CD4-positive, alpha-beta T cell (primary cell): ENCODE measurements at regions of chr2 and their contacts with region 1.

Region 1: GRCh38 chr2:118186110-118186857 is 98.0 kb downstream of the INSIG2 start:
- DNase-seq: peak; percentile 70 to 96 (median 86)
- ATAC-seq: peak; percentile 94
- H3K4me3 ChIP-seq: peak overlapping the region; percentile 76
- H3K4me3 Mint-ChIP-seq: peak overlapping the region; percentile 96
- H3K27ac ChIP-seq: peak overlapping the region; percentile 69 to 71
- H3K27ac Mint-ChIP-seq: peak overlapping the region; percentile 87
- H3K4me1 ChIP-seq: peaks cover 18% of the 10 kb centered on the region
- H3K4me1 Mint-ChIP-seq: peaks cover 16% of the 10 kb centered on the region
- H3K27me3 ChIP-seq: no peaks in the 10 kb centered on the region
- H3K27me3 Mint-ChIP-seq: no peaks in the 10 kb centered on the region
- CTCF ChIP-seq: no peak

Region 2: DNA sequence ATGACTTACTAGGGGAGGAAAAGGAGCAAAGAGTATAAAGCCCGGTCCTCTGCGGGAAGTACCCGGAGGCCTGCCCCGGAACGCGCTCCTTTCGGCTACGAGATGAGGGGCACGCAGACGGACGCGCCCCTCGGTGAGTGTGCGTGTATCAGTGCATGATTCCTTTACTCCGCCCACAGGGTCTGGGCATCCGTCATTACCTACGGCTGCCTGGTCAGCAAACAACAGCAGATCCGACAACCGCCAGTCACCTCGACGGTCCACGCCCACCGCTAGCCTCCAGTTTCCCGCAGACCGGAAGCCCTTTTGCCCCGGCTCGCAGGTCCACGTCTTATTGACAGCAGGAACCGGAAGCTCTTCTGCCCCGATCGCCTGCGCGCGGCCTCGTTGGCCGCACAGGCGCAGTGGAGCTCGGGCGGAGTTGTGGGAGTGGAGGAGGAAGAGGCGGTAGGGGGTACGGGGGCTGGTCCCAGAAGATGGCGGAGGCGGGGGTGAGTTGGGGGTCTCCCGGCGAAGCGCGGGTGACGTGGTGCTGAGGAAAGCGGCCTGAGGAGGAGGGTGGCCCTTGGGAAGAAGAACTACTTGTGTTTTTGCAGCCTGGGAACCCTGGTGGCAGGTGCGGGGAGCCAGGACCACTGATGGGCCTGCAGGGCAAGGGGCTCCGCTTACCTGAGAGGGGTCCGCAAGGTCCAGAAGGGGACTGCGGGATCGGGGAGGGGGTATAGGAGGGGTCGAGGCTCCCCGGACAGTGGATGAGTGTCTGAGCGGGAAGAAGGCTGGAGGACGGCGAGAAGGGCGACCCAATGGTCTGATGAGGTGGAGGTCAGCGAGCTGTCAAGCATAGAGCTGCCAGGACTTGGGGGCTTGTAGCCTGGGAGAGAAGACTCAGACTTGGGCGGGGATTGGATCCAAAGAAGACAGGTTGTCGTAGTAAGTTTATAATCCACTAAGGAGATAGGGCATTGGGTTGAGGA is 97.9 kb before region 1 on chr2 and contains the start of gene INSIG2:
- CTCF ChIA-PET with region 1: interaction called, 7 read pairs
- POLR2A ChIA-PET with region 1: interaction called, 16 read pairs
- intact Hi-C with region 1: loop called (anchors 2 to 10 kb)
- DNase-seq: peak; percentile 71 to 95 (median 81)
- ATAC-seq: peak; percentile 88
- H3K4me3 ChIP-seq: peak within 1 kb of the TSS; percentile 91
- H3K4me3 Mint-ChIP-seq: peak within 1 kb of the TSS; percentile 97
- H3K27ac ChIP-seq: peak within 1 kb of the TSS; percentile 58 to 61
- H3K27ac Mint-ChIP-seq: peak within 1 kb of the TSS; percentile 88
- H3K4me1 ChIP-seq: peaks cover 10% of the 10 kb centered on the region
- H3K4me1 Mint-ChIP-seq: peaks cover 38% of the 10 kb centered on the region
- H3K27me3 ChIP-seq: no peaks in the 10 kb centered on the region
- H3K27me3 Mint-ChIP-seq: no peaks in the 10 kb centered on the region
- CTCF ChIP-seq: no peak
- total RNA-seq, gene INSIG2: 7.3 to 7.7 TPM

Region 3: GRCh38 chr2:118097657-118098056 is 88.6 kb before region 1 on chr2:
- CTCF ChIA-PET with region 1: no interaction called
- POLR2A ChIA-PET with region 1: interaction called, 3 read pairs
- intact Hi-C with region 1: loop called in 1 of 2 experiments (anchors 10 kb)
- DNase-seq: peak in 2 of 14 experiments; percentile 34 to 39
- ATAC-seq: no peak
- H3K4me3 ChIP-seq: no peak overlapping the region
- H3K4me3 Mint-ChIP-seq: no peak overlapping the region
- H3K27ac ChIP-seq: no peak overlapping the region
- H3K27ac Mint-ChIP-seq: no peak overlapping the region
- H3K4me1 ChIP-seq: peaks cover 5% of the 10 kb centered on the region
- H3K4me1 Mint-ChIP-seq: peaks cover 40% of the 10 kb centered on the region
- H3K27me3 ChIP-seq: no peaks in the 10 kb centered on the region
- H3K27me3 Mint-ChIP-seq: no peaks in the 10 kb centered on the region
- CTCF ChIP-seq: no peak

Region 4: DNA sequence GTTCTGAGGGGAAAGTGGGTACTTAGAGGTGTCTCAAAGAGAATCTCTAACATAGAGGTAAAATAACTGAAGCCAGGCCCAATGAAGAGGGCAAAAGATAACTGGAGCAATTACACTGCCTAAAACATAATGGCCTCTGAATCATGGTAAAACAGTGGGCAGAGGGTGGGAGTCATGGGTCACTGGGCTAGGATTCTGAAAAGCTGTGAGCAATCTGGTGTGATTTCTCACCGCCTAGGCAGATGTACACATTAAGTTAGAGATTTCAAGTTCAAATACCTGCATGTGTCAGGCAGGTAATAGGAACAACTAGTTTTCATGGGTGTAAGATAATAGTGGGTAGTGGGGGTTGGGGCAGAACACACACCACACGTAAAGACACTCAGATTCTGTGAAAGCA is 52.4 kb before region 1 on chr2:
- CTCF ChIA-PET with region 1: no interaction called
- POLR2A ChIA-PET with region 1: no interaction called
- intact Hi-C with region 1: no loop called
- DNase-seq: no peak
- ATAC-seq: no peak
- H3K4me3 ChIP-seq: no peak overlapping the region
- H3K4me3 Mint-ChIP-seq: no peak overlapping the region
- H3K27ac ChIP-seq: no peak overlapping the region
- H3K27ac Mint-ChIP-seq: no peak overlapping the region
- H3K4me1 ChIP-seq: peaks cover 4% of the 10 kb centered on the region
- H3K4me1 Mint-ChIP-seq: peaks cover 14% of the 10 kb centered on the region
- H3K27me3 ChIP-seq: no peaks in the 10 kb centered on the region
- H3K27me3 Mint-ChIP-seq: peaks cover 5% of the 10 kb centered on the region
- CTCF ChIP-seq: no peak

Region 5: DNA sequence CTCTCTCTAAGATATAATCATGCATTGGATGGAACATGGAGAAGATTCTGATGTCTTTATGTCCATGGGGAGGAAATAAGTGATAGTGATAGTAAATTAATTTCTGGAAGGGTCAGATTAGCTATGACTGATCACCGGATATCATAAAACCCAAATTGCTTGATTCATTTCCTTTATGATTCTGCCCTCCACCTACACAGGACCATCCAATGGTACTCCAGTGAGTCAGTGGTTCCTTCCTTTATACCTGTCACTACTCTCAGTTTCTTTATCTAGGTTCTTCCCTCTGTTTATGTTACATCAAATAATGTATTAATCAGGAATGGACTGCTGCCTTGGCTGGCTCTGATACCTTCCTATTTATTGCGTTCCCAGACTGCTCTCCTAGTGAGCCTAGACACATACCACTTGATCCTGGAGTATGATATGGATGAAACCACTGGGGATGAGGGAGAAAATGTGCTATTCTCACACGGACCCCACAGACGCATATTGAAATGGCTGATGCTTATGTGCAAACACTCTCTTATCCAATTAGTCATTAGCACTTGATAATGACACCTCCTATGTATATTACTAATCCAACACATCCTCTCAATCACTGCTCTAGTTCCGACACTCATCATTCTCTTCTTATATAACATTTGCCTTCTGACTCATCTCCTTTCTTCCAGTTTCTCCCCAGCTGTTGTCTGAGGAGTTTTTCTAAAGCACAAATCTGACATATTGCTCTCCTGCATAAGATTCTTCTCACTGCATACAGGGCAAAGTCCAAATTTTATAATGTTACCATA is 217.6 kb after region 1 on chr2:
- CTCF ChIA-PET with region 1: no interaction called
- POLR2A ChIA-PET with region 1: no interaction called
- intact Hi-C with region 1: no loop called
- DNase-seq: no peak
- ATAC-seq: no peak
- H3K4me3 ChIP-seq: no peak overlapping the region
- H3K4me3 Mint-ChIP-seq: no peak overlapping the region
- H3K27ac ChIP-seq: no peak overlapping the region
- H3K27ac Mint-ChIP-seq: no peak overlapping the region
- H3K4me1 ChIP-seq: no peaks in the 10 kb centered on the region
- H3K4me1 Mint-ChIP-seq: no peaks in the 10 kb centered on the region
- H3K27me3 ChIP-seq: peaks cover 0 to 10% of the 10 kb centered on the region in 2 experiments
- H3K27me3 Mint-ChIP-seq: peaks cover 61% of the 10 kb centered on the region
- CTCF ChIP-seq: no peak